Caco-2 (cell line): ENCODE measurements at regions of chr5 and their contacts with region 1.

Region 1: GRCh38 chr5:134041570-134042411 is 37.0 kb upstream of the VDAC1 start:
- DNase-seq: no peak
- H3K4me3 ChIP-seq: no peak overlapping the region
- H3K4me3 Mint-ChIP-seq: no peak overlapping the region
- H3K27ac Mint-ChIP-seq: no peak overlapping the region
- H3K4me1 ChIP-seq: no peaks in the 10 kb centered on the region
- H3K4me1 Mint-ChIP-seq: peaks cover 17% of the 10 kb centered on the region
- H3K27me3 ChIP-seq: no peaks in the 10 kb centered on the region
- H3K27me3 Mint-ChIP-seq: no peaks in the 10 kb centered on the region
- CTCF ChIP-seq: no peak

Region 2: DNA sequence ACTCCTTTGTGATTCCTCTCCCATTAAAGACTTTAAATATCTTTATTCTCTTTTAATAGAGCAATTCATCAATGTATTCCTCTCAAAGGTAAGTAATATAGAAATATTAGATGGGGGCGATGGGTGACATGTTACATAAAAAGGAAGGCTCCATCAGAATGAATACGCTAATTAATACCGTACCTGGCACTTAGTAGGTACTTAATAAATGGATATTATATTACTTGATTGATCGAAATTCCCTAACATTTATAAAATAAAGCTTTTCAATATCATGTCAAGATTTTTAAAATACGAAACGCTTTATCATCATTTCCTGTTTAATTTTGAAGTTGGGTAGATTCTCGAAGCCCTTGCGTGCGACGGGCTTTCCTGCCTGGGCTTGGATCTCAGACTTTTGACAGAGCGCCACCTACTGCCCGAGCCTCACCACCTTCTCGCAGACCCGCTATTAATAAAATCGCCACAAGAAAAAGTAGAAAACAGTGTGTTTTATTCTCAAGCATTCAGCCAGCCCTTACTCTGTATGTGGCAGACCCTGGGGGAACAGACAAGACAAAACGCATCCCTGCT is 172.8 kb before region 1 on chr5:
- CTCF ChIA-PET with region 1: no interaction called
- POLR2A ChIA-PET with region 1: no interaction called
- intact Hi-C with region 1: no loop called
- DNase-seq: peak in 1 of 2 experiments; percentile 71
- H3K4me3 ChIP-seq: no peak overlapping the region
- H3K4me3 Mint-ChIP-seq: no peak overlapping the region
- H3K27ac Mint-ChIP-seq: no peak overlapping the region
- H3K4me1 ChIP-seq: no peaks in the 10 kb centered on the region
- H3K4me1 Mint-ChIP-seq: no peaks in the 10 kb centered on the region
- H3K27me3 ChIP-seq: peaks cover 3% of the 10 kb centered on the region; the same call in 1 of the 2 replicates
- H3K27me3 Mint-ChIP-seq: peaks cover 9% of the 10 kb centered on the region
- CTCF ChIP-seq: peak; percentile 64 to 85

Region 3: DNA sequence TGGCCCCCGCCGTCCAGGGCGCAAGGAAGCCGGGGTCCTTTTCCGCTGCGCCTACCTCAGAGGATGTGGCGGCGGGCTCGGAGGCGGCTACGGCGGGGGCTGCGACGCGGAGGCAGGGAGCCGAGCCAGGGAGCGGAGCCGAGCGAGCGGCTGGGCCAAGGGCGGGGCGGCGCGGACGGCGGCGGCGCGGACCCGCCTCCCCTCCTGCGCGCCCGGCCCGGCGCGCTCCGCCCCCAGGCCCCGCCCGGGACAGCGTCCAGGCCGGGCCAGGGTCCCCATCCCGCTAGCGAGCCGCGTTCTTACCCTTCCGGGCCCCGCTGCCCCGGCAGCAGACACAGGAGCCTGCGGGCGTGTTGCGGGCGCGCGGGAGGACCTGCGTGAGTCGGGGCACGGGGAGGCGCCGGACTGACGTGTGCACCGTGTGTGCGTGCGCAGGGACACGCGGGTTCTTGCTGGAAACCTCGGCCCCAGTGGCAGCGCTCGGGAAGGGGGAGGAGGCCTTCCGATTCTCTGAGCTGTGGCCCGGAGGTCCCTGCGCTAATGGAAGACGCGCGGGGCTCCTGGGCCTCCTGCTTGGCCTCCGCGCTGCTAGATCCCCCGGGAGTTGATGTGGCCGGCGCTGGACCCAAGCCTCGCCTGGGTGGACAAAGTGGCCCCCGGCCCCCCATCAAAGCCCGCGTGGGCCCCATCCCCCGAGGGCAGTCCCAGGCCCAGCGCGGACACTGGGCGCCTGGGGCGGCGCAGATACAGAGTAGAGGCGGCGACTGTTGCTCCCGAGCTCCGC is 37.0 kb before region 1 on chr5 and contains the start of gene VDAC1:
- CTCF ChIA-PET with region 1: interaction called, 7 read pairs
- POLR2A ChIA-PET with region 1: no interaction called
- intact Hi-C with region 1: loop called (anchors 5 kb)
- DNase-seq: peak; percentile 80 to 88
- H3K4me3 ChIP-seq: peak within 1 kb of the TSS; percentile 91
- H3K4me3 Mint-ChIP-seq: peak within 1 kb of the TSS; percentile 81
- H3K27ac Mint-ChIP-seq: peak within 1 kb of the TSS; percentile 89
- H3K4me1 ChIP-seq: peaks cover 36% of the 10 kb centered on the region
- H3K4me1 Mint-ChIP-seq: peaks cover 7% of the 10 kb centered on the region
- H3K27me3 ChIP-seq: no peaks in the 10 kb centered on the region
- H3K27me3 Mint-ChIP-seq: no peaks in the 10 kb centered on the region
- CTCF ChIP-seq: no peak
- total RNA-seq, gene VDAC1: 317 and 358 TPM in 2 replicates

Region 4: DNA sequence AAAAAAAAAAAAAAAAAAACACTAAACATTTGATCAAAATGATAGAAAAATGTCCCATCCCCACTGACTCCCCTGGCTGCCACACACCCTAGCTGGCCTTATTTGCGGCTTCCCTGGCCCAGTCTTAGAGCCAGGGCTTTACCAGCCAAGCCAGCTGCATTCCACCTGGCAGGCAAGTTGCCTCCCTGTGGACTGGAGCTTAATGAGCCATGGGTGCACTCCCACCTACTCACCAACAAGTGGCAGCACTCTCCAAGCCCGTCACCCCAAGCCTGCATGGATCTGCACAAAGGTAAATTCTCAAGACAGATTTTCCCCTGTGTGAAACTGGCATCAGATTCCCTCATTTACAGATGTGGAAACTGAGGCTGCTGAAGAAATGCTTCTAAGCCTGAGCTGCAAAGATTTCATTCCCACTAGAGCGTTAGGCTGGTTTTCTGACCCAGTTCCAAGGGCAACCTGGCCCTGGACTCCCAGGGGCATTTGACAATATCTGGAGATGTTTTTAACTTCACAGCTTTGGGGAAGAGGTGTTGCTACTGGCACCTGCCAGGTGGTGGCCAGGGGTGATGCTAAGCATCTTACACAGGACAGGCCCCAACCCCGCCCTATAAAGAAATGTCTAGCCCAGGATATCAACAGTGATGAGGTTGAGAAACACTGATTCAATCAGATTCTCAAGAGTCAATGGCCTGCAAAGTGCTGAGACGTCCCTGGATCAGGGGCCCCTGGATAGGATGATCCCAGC is 15.1 kb before region 1 on chr5:
- CTCF ChIA-PET with region 1: interaction called, 62 read pairs
- POLR2A ChIA-PET with region 1: no interaction called
- intact Hi-C with region 1: loop called (anchors 1 kb)
- DNase-seq: peak; percentile 78 to 84
- H3K4me3 ChIP-seq: no peak overlapping the region
- H3K4me3 Mint-ChIP-seq: no peak overlapping the region
- H3K27ac Mint-ChIP-seq: no peak overlapping the region
- H3K4me1 ChIP-seq: peaks cover 7% of the 10 kb centered on the region; the same call in 1 of the 2 replicates
- H3K4me1 Mint-ChIP-seq: peaks cover 6% of the 10 kb centered on the region
- H3K27me3 ChIP-seq: no peaks in the 10 kb centered on the region
- H3K27me3 Mint-ChIP-seq: no peaks in the 10 kb centered on the region
- CTCF ChIP-seq: peak; percentile 56 to 84

Region 5: GRCh38 chr5:134077926-134078580 is 36.3 kb after region 1 on chr5:
- CTCF ChIA-PET with region 1: no interaction called
- POLR2A ChIA-PET with region 1: no interaction called
- intact Hi-C with region 1: no loop called
- DNase-seq: no peak
- H3K4me3 ChIP-seq: no peak overlapping the region
- H3K4me3 Mint-ChIP-seq: no peak overlapping the region
- H3K27ac Mint-ChIP-seq: no peak overlapping the region
- H3K4me1 ChIP-seq: no peaks in the 10 kb centered on the region
- H3K4me1 Mint-ChIP-seq: no peaks in the 10 kb centered on the region
- H3K27me3 ChIP-seq: no peaks in the 10 kb centered on the region
- H3K27me3 Mint-ChIP-seq: no peaks in the 10 kb centered on the region
- CTCF ChIP-seq: no peak

Region 6: DNA sequence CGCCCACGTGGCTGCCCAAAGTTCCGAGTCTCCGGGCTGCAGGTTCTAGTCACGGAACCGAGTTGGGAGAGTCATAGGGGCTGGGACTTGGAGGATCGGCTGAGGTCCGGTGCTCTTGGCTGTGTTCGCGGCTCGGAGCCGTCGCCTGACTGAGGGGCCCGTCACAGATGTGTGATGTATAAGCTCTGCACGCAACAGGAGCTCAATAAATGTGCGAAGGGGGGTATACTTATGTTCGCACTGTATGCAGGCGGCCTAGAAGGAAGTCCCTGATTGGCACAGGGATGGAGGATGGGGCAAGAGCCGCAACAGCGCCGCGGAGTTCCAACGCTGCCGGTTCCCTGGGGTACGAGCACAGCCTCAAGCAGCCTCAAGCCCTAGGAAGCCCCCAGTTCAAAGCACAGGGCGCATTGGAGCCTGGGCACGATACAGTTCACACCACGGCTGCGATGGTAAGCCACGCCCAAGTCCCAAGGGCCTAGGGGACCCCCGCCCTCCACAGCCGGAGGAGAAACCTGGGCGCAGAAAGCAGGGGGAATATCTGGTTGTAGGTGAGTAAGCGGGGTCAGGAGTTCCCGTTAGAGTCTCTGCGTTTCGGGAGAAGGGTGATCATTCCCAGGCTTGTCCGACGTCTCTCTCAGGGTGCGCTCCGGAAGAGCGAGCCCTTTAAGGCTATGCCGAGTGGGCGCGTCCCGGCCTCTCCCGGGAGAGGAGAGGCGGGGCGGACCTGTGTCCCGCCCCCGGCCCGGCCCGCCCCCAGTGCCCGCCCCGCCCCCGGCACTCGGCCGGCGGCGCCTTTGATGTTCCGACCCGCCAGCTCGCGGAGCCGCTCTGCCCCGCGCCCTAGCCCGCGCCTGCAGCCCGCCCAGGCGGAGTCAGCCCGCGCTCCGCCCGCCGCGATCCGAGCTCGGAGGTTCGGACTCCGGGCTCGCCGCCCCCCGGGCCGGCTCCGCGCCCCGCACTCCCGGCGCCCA is 72.4 kb after region 1 on chr5 and contains the start of gene TCF7:
- CTCF ChIA-PET with region 1: interaction called, 10 read pairs
- POLR2A ChIA-PET with region 1: no interaction called
- intact Hi-C with region 1: no loop called
- DNase-seq: peak; percentile 80 to 88
- H3K4me3 ChIP-seq: peak within 1 kb of the TSS; percentile 87
- H3K4me3 Mint-ChIP-seq: peak within 1 kb of the TSS; percentile 83
- H3K27ac Mint-ChIP-seq: peak within 1 kb of the TSS; percentile 67
- H3K4me1 ChIP-seq: peaks cover 12% of the 10 kb centered on the region
- H3K4me1 Mint-ChIP-seq: peaks cover 6% of the 10 kb centered on the region
- H3K27me3 ChIP-seq: no peaks in the 10 kb centered on the region
- H3K27me3 Mint-ChIP-seq: no peaks in the 10 kb centered on the region
- CTCF ChIP-seq: no peak
- total RNA-seq, gene TCF7: 36.2 and 36.5 TPM in 2 replicates

Region 7: GRCh38 chr5:134140530-134141201 is 98.9 kb after region 1 on chr5:
- CTCF ChIA-PET with region 1: interaction called, 67 read pairs
- POLR2A ChIA-PET with region 1: no interaction called
- intact Hi-C with region 1: loop called (anchors 1 kb)
- DNase-seq: peak; percentile 75 to 76
- H3K4me3 ChIP-seq: no peak overlapping the region
- H3K4me3 Mint-ChIP-seq: no peak overlapping the region
- H3K27ac Mint-ChIP-seq: peak overlapping the region; percentile 30
- H3K4me1 ChIP-seq: peaks cover 30% of the 10 kb centered on the region
- H3K4me1 Mint-ChIP-seq: peaks cover 22% of the 10 kb centered on the region
- H3K27me3 ChIP-seq: no peaks in the 10 kb centered on the region
- H3K27me3 Mint-ChIP-seq: no peaks in the 10 kb centered on the region
- CTCF ChIP-seq: peak; percentile 79 to 91

Region 8: DNA sequence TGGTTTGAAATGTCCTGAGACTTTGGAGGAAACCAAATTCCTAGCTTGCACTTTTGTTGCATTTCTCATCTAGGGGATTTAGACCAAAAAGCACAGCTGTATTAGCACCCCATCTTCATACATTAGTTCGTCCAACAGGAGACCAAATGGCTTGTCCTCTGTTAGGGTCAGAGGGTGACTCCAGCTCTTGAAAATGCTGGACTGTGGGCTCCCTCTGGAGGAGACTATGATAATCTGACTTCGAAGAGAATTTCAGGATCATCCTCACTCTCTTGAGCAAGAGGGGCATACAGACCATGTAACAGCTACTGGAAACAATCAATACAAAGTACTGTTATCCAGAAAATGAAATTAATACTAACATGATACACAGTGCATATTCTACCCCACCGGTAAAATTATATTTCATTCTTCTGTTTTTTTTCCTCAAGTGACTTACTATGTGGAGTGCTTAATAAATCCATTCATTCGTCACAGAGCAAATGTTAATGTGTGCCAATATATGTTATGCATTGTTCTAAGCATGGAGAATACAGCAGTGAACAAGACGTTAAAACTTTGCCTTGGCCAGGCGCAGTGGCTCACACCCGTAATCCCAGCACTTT is 247.8 kb after region 1 on chr5:
- CTCF ChIA-PET with region 1: interaction called, 5 read pairs
- POLR2A ChIA-PET with region 1: no interaction called
- intact Hi-C with region 1: loop called (anchors 1 kb)
- DNase-seq: peak; percentile 72 to 79
- H3K4me3 ChIP-seq: no peak overlapping the region
- H3K4me3 Mint-ChIP-seq: no peak overlapping the region
- H3K27ac Mint-ChIP-seq: no peak overlapping the region
- H3K4me1 ChIP-seq: no peaks in the 10 kb centered on the region
- H3K4me1 Mint-ChIP-seq: peaks cover 11% of the 10 kb centered on the region
- H3K27me3 ChIP-seq: no peaks in the 10 kb centered on the region
- H3K27me3 Mint-ChIP-seq: no peaks in the 10 kb centered on the region
- CTCF ChIP-seq: peak; percentile 69 to 86